Activated CD8-positive, alpha-beta T cell treated with anti-CD3 and anti-CD28 coated beads for 36 hours (primary cell): ENCODE measurements at regions of chr2 and their contacts with region 1.

Region 1: DNA sequence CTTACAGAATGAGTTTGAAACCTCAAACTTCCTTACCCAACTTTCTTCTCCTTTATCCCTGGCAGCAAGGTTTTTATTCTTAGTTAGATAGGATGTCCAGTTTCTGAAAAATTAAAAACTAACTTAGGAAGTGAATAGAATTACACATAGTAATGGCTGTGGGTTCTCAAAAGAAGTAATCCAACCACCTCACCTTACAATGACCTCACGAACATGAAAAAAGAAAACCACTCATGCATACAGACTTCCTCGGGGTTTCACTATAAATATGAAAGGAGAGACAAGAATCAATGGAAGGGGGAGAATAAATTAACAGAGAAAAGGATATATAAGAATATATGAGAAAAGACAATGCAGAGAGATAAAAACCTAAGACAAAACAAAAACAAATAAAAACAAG is 1044.3 kb upstream of the KLHL29 start:
- DNase-seq: no peak
- ATAC-seq: no peak
- H3K4me3 Mint-ChIP-seq: no peak overlapping the region
- H3K27ac Mint-ChIP-seq: no peak overlapping the region
- H3K4me1 Mint-ChIP-seq: no peaks in the 10 kb centered on the region
- H3K27me3 Mint-ChIP-seq: no peaks in the 10 kb centered on the region
- CTCF ChIP-seq: no peak

Region 2: GRCh38 chr2:22355816-22356433 is 15.2 kb after region 1 on chr2:
- CTCF ChIA-PET with region 1: interaction called, 11 read pairs
- POLR2A ChIA-PET with region 1: no interaction called
- intact Hi-C with region 1: no loop called
- DNase-seq: peak; percentile 70
- ATAC-seq: no peak
- H3K4me3 Mint-ChIP-seq: no peak overlapping the region
- H3K27ac Mint-ChIP-seq: no peak overlapping the region
- H3K4me1 Mint-ChIP-seq: no peaks in the 10 kb centered on the region
- H3K27me3 Mint-ChIP-seq: no peaks in the 10 kb centered on the region
- CTCF ChIP-seq: peak; percentile 89